ENCODE measurements at regions of chr5 and their contacts with region 1.

Region 1: GRCh38 chr5:165360784-165361542 is 1855.5 kb downstream of the MAT2B start:
- DNase-seq: no peak
- H3K4me3 Mint-ChIP-seq: no peak overlapping the region
- H3K27ac Mint-ChIP-seq: no peak overlapping the region
- H3K4me1 Mint-ChIP-seq: no peaks in the 10 kb centered on the region
- H3K27me3 Mint-ChIP-seq: no peaks in the 10 kb centered on the region

Region 2: GRCh38 chr5:164540174-164540573 is 820.8 kb before region 1 on chr5:
- intact Hi-C with region 1: loop called (anchors 10 kb)
- DNase-seq: no peak
- H3K4me3 Mint-ChIP-seq: no peak overlapping the region
- H3K27ac Mint-ChIP-seq: no peak overlapping the region
- H3K4me1 Mint-ChIP-seq: no peaks in the 10 kb centered on the region
- H3K27me3 Mint-ChIP-seq: no peaks in the 10 kb centered on the region

Region 3: DNA sequence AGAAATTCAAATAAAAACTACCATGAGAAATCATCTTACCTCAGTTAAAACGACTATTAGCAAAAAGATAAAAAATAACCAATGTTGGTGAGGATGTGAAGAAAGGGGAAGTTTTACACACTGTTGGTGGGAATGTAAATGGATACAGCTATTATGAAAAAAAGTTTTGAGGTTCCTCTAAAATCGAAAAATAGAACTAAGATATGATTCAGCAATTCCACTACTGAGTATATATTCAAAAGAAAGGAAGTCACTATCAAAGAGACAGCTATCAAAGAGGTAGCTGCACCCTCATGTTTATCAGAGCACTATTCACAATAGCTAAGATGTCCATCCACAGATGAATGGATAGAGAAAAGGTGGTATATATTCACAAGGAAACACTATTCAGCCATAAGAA is 32.9 kb after region 1 on chr5:
- intact Hi-C with region 1: no loop called
- DNase-seq: no peak
- H3K4me3 Mint-ChIP-seq: no peak overlapping the region
- H3K27ac Mint-ChIP-seq: no peak overlapping the region
- H3K4me1 Mint-ChIP-seq: no peaks in the 10 kb centered on the region
- H3K27me3 Mint-ChIP-seq: no peaks in the 10 kb centered on the region

Region 4: DNA sequence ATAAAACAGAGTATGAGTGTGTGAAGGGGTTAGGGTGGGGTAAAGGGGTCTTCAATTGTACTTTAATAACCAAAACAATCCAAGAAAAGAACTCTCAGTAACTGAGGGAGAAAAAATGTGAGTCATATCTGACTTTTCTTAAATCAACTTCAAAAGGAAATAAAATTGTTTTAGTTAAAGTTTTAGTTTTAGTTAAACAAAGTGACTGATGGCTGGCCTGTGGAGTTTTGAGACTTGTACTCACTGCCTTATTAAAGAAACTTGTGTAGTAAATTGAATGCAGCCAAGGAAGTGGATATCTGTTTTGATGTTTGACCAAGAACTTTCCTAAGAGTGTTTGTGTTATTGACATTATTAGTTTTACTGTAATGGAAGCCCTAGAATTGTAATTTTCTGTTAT is 177.1 kb after region 1 on chr5:
- intact Hi-C with region 1: no loop called
- DNase-seq: no peak
- H3K4me3 Mint-ChIP-seq: no peak overlapping the region
- H3K27ac Mint-ChIP-seq: no peak overlapping the region
- H3K4me1 Mint-ChIP-seq: no peaks in the 10 kb centered on the region
- H3K27me3 Mint-ChIP-seq: no peaks in the 10 kb centered on the region